Left cardiac atrium (tissue), 4 donors: ENCODE measurements at regions of chr4 and their contacts with region 1.

Region 1: GRCh38 chr4:154551872-154552686 is 1.9 kb upstream of the PLRG1 start:
- DNase-seq: peak; percentile 72
- ATAC-seq: peak; percentile 67 to 73

Region 2: DNA sequence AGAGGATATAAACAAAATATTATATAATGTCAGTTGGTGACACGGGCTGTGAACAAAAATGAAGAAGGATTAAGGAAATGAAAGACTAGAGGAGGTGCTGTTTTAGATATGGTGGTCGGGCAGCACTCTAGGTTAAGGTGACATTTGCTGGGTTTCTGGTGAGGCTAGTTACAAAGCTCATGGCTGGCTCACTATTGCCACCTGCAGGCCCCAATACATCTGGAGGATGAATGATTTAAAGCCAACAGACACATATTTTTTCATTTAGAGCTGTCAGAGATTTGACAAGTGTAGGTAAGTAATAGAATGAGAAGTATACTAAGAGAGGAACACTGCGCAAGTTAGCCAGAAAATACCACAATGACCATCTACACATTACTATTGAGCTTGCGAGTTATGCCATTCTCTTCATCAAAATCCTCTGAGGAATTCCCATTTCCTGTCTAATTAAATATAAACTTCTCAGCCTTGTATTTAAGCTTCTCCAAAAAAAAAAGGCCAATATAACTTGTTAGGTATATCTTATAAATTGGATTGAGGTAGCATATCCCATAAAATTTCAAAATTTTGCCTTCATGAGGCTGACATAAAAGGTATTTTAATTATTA is 66.7 kb after region 1 on chr4:
- intact Hi-C with region 1: loop called (anchors 1 to 10 kb)
- DNase-seq: peak; percentile 53
- ATAC-seq: peak in 1 of 2 donors; percentile 34

Region 3: DNA sequence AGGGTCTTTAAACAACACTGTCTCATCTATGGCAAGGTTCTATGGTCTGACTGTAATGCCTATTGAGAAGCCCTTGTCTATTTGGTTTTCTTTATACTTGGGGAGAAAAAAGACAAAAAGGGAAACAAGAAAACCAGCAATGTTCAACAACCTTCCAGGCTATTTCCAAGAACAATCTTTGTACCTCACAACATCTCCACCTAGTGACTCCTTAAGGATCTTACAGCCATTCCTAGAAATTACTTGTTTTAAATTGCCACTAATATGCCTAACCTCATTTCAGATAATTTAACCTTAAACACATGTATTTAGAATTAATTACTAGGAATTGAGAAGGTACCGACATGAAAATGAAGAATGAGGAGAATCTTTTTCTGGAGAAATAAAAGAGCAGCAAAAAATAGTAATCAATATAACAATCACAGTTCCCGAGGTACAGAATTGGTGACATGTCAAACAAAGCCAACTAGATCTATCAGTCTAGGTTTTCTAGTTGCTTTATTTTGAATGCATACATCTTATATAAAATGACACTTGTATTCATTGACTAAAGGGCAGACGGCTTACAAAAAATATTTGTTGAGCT is 227.4 kb after region 1 on chr4:
- intact Hi-C with region 1: loop called in 1 of 2 experiments (anchors 2 kb)
- DNase-seq: no peak
- ATAC-seq: no peak

Region 4: DNA sequence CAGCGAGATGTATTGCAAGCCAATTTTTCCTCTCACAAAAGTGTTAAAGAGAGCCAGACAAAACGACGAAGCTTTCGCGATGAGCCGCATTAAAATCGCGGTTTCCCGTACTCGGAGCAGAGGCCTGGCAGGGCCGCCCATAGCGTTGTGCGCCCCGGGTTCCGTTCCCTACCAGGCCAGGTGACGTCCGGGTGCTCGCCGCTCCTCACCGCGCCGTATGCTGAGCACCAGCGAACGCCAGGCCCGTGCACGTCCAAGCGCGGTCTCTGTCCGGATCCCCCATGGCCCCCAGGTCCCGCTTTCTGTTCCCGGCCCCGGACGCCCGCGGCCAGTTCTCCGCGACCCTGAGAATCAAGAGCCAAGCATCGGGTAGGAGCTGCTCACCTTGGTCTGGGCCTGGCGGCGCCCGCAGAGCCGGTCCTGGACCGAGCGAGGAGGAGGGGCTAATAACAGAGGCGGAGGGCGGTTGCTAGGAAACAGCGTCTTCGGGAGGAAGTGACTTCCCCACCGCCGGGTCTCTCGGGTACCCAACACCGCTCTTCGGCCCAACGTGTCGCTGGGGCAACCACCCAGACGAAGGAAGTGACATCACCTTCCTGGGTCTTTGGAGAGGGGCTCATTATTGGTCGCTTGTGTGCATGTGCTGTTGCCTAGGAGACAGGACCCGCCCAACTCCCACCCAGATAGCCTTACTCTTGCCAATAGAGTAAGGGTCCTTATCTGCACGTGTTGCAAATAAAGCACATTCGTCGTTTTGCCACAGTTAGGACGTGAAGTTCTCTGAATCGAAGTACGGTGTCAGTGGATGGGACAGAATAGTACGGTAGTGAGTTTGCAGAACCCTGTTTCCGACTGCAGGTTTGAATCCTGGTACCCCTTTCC is 824.5 kb after region 1 on chr4 and contains the start of gene MAP9:
- intact Hi-C with region 1: loop called in 1 of 2 experiments (anchors 10 kb)
- DNase-seq: peak; percentile 91
- ATAC-seq: peak; percentile 98 to 99
- total RNA-seq, gene MAP9: 6.7 to 6.8 TPM